Right ventricle myocardium superior (tissue), 1 donor: ENCODE measurements at regions of chr1 and their contacts with region 1.

Region 1: DNA sequence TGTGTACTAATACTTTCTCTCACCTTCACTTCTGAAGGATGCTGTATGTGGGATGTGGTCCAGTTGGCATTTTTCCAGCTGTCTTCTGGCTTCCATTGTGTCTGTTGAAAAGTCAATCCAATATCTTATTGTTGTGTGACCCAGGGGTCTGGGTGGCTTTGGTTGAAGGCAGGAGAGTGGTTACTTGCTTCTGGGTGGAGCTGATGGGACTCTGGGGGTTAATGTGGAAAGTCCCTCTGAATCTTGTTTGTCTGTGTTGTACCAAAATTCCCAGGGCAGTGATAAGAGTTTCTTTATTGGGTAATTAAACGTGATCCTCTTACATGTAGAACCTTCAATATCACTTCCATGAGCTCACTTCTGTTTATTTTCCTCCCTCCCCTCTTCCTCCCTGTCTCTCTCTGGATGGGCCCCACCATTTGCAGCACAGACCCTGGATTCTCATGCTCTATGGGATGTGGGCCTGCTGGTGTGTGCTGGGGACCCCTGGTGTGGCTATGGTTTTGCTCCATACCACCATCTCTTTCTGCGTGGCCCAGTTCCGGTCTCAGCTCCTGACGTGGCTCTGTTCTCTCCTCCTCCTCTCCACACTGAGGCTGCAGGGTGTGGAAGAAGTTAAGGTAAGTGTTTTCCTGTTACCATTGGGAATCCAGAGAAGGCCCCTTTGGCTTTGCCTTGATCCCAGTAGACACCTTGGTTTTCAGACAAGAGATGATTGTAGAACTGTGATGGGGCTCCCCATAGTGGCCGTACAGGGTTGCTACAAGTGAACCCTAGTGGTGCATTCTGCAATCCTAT is 71.5 kb downstream of the HHAT start:
- DNase-seq: peak; percentile 61
- ATAC-seq: peak; percentile 94

Region 2: DNA sequence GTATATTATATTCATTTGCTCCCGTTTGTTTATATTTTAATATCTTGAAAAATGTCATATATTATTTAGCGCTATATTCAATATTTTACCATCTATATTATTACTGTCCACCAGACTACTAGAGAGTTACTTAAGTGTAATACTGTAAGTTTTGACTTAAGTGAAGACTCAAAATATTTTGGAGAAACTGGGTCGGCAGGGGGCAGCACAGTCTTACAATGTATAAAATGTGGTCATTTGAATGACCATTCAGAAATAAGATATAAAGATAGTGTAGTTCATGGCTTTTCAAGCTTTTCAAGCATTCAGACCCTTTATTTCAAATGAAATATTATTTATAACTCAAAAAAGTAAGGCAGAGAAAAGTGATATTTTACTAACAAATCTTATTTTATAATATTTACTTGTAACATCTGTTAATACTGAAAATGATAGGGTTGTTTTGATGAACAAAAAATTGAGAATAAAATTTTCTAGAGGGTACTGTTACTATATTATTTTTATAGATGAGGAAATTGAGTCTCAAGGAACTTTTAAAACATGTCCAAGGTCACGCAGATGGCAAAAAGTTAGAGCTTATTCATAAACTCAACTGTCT is 256.7 kb before region 1 on chr1:
- intact Hi-C with region 1: loop called (anchors 5 kb)
- DNase-seq: peak; percentile 85
- ATAC-seq: peak; percentile 43

Region 3: DNA sequence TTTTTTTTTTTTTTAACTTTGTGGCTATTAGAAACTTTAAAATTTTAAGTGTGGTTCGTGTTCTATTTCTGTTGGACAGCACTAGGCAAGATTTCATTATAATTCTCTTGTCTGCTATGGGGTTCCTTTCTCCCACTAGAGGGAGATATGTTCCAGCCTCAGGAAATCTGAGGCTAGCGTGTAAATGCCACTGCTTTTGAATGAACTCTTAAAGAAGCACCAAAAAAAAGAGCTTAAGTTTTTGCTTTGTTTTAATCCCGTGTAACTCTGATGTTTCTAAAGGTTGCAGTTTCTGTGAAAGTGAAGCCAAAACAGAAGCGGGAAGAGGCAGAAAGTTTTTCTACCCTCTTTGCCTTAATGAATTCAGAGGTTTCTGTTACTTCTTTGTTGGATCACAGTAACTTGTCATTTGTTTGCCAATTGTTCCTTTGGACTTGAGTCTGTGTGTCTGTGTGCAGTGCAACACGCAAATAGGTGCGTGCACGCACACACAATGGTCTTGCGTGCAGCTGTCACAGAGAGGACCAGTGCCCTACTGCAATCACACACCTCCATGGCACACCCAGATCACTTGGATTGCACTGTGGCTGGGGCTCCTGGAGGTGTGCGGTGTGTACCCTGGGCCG is 39.3 kb before region 1 on chr1:
- intact Hi-C with region 1: loop called (anchors 5 kb)
- DNase-seq: no peak
- ATAC-seq: peak; percentile 68